ENCODE measurements at regions of chr1 and their contacts with region 1.

Region 1: DNA sequence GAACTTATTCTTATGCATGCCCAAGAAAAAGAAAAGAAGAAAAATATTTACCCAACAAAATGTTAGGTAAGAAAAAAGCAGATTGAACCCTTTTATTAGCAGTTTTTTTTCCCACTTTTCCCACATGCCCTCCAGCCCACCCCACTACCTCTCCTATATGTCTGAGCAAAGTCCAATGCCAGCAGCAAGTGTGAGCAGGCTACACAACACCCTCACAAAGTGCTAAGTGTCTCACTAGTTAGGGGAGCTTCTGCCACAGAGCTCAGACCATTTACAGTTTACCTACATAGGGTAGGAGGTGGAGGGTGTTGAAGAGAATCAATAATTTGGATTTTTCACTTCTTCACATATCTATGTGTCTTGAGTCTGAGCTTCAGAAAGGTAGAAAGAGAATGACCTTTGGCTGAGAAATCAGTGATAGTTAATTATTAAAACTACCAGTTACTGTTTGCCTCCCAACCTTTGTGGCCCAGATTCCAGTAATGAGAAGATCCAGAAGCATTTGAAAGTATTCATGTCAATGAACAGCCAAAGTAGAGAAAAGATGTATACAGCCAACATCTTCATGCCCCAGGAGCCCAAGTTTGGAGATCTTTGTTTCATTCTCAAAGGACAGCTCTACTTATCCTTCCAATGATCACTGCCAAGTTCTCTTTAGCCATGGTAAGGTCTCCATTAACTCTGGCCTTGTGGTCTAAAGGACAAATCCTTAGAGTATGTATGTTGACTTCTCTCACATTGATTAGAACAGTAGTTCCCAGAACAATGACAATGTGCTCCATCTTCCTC is 26.2 kb downstream of the OR10J5 start:
- DNase-seq: no peak
- CTCF ChIP-seq: no peak

Region 2: DNA sequence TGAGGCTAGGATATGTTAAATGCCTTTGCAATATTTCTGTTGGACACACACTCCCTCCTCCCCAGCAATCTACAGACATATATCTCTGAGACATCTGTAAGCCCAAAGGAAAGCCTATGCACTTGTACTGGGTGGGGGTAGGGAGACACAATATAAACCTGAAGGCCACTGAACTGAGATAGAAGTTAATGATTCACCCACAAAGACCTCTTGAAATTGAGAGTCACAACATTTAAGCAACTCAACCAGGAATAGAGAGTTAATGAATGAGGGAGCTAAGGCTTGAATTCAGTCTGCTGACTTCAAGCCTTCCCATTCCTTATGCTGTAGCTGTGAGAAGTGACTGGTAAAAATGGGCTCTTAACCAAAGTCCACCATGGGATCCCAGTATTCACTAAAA is 65.1 kb before region 1 on chr1:
- in situ Hi-C with region 1: loop called (anchors 10 kb)
- DNase-seq: no peak
- CTCF ChIP-seq: no peak

Measured in GM13976 (cell line).